ENCODE measurements at regions of chr3 and their contacts with region 1.

Region 1: GRCh38 chr3:160956806-160957205 is 148.3 kb downstream of the B3GALNT1 start:
- ATAC-seq: peak in 2 of 8 experiments; percentile 72 to 79
- H3K4me3 ChIP-seq: no peak overlapping the region
- H3K27ac ChIP-seq: no peak overlapping the region
- H3K4me1 ChIP-seq: peaks cover 8 to 9% of the 10 kb centered on the region in 2 donors

Region 2: DNA sequence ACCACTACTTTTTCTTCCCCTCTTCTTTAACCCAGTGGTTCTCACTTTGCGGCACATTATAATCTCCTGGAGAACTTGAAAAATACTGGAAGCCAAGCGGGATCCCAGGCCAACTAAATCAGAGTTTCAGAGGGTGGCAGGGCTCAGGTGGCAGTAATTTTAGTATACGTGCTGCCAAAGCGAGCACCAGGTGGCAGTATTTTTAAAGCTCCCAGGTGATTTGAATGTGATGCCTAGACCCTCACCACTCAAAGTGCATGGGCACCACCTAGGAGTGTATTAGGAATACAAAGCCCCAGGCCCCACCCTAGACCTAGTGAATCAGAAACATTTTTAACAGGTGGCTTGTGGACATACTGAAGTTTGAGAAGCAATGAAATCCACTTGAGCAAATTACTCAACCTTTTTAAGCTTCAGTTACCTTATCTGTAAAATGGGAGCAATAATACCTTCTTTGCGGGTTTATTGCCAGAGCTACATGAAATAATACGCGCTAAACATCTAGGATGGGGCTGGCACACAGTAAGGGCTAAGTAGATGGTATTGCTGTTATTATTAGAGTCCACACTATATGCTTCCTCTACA is 140.1 kb after region 1 on chr3:
- in situ Hi-C with region 1: loop called in 1 of 9 experiments (anchors 25 kb)
- ATAC-seq: no peak
- H3K4me3 ChIP-seq: no peak overlapping the region
- H3K27ac ChIP-seq: no peak overlapping the region
- H3K4me1 ChIP-seq: no peaks in the 10 kb centered on the region

Region 3: DNA sequence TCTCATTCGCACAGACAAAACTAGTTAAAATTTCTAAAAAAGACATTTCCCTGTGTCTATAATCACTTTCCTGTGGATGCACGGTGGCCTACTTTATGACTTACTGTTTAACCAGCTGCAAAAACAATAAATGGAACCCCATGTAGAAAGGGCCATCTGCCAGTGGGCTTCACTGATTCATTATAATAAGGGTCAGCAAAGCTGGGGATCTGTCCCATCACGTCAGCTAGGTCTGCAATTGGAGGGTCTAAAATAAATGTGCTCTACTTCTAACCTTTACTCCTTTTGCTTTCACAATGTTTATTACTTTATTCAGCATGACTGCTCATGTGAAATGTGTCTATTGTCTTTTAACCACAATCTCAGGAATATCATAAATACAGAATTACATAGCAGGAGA is 221.2 kb after region 1 on chr3:
- in situ Hi-C with region 1: loop called in 1 of 9 experiments (anchors 25 kb)
- ATAC-seq: peak in 5 of 8 experiments; percentile 30 to 69 (median 37)
- H3K4me3 ChIP-seq: no peak overlapping the region
- H3K27ac ChIP-seq: no peak overlapping the region
- H3K4me1 ChIP-seq: peaks cover 0 to 12% of the 10 kb centered on the region in 2 donors

Measured in motor neuron (in vitro differentiated cells).